ENCODE measurements at regions of chr2 and their contacts with region 1.

Region 1: GRCh38 chr2:206159346-206160124 is at the starts of genes EEF1B2 and NDUFS1:
- DNase-seq: peak; percentile 96 to 97 (median 97)
- H3K4me3 ChIP-seq: peak within 1 kb of the TSS; percentile 69 to 78
- H3K4me3 Mint-ChIP-seq: peak within 1 kb of the TSS; percentile 97 to 100 (median 100)
- H3K27ac ChIP-seq: peak within 1 kb of the TSS; percentile 94
- H3K27ac Mint-ChIP-seq: peak within 1 kb of the TSS; percentile 98 to 100 (median 99)
- H3K4me1 ChIP-seq: peaks cover 47% of the 10 kb centered on the region
- H3K4me1 Mint-ChIP-seq: peaks cover 38 to 71% (median 56%) of the 10 kb centered on the region in 4 donors
- H3K27me3 ChIP-seq: no peaks in the 10 kb centered on the region
- H3K27me3 Mint-ChIP-seq: no peaks in the 10 kb centered on the region
- total RNA-seq, gene EEF1B2: 947 to 1,026 TPM
- total RNA-seq, gene NDUFS1: 53.4 to 57.6 TPM

Region 2: GRCh38 chr2:206085742-206086445 is 73.6 kb before region 1 on chr2 and contains the start of gene INO80D:
- CTCF ChIA-PET with region 1: interaction called, 19 read pairs
- POLR2A ChIA-PET with region 1: interaction called, 29 read pairs
- intact Hi-C with region 1: loop called (anchors 1 kb)
- DNase-seq: peak; percentile 88 to 91 (median 89)
- H3K4me3 ChIP-seq: peak within 1 kb of the TSS; percentile 81 to 94
- H3K4me3 Mint-ChIP-seq: peak within 1 kb of the TSS; percentile 98 to 100 (median 99)
- H3K27ac ChIP-seq: peak within 1 kb of the TSS; percentile 98
- H3K27ac Mint-ChIP-seq: peak within 1 kb of the TSS; percentile 99 to 100 (median 100)
- H3K4me1 ChIP-seq: peaks cover 44% of the 10 kb centered on the region
- H3K4me1 Mint-ChIP-seq: peaks cover 24 to 54% (median 37%) of the 10 kb centered on the region in 4 donors
- H3K27me3 ChIP-seq: no peaks in the 10 kb centered on the region
- H3K27me3 Mint-ChIP-seq: no peaks in the 10 kb centered on the region
- total RNA-seq, gene INO80D: 40.2 to 41.3 TPM

Region 3: GRCh38 chr2:206274434-206275268 is 115.1 kb after region 1 on chr2 and contains the start of gene ZDBF2:
- CTCF ChIA-PET with region 1: interaction called, 5 read pairs
- POLR2A ChIA-PET with region 1: interaction called, 3 read pairs
- intact Hi-C with region 1: loop called (anchors 2 kb)
- DNase-seq: peak; percentile 48 to 68 (median 64)
- H3K4me3 ChIP-seq: peak within 1 kb of the TSS in 1 of 2 donors; percentile 61
- H3K4me3 Mint-ChIP-seq: peak within 1 kb of the TSS; percentile 83 to 92 (median 88)
- H3K27ac ChIP-seq: peak within 1 kb of the TSS; percentile 63
- H3K27ac Mint-ChIP-seq: peak within 1 kb of the TSS; percentile 72 to 94 (median 89)
- H3K4me1 ChIP-seq: peaks cover 13% of the 10 kb centered on the region
- H3K4me1 Mint-ChIP-seq: peaks cover 15 to 25% (median 21%) of the 10 kb centered on the region in 4 donors
- H3K27me3 ChIP-seq: peaks cover 11% of the 10 kb centered on the region
- H3K27me3 Mint-ChIP-seq: peaks cover 16 to 28% of the 10 kb centered on the region in 2 donors
- total RNA-seq, gene ZDBF2: 18.6 to 21.4 TPM

Region 4: DNA sequence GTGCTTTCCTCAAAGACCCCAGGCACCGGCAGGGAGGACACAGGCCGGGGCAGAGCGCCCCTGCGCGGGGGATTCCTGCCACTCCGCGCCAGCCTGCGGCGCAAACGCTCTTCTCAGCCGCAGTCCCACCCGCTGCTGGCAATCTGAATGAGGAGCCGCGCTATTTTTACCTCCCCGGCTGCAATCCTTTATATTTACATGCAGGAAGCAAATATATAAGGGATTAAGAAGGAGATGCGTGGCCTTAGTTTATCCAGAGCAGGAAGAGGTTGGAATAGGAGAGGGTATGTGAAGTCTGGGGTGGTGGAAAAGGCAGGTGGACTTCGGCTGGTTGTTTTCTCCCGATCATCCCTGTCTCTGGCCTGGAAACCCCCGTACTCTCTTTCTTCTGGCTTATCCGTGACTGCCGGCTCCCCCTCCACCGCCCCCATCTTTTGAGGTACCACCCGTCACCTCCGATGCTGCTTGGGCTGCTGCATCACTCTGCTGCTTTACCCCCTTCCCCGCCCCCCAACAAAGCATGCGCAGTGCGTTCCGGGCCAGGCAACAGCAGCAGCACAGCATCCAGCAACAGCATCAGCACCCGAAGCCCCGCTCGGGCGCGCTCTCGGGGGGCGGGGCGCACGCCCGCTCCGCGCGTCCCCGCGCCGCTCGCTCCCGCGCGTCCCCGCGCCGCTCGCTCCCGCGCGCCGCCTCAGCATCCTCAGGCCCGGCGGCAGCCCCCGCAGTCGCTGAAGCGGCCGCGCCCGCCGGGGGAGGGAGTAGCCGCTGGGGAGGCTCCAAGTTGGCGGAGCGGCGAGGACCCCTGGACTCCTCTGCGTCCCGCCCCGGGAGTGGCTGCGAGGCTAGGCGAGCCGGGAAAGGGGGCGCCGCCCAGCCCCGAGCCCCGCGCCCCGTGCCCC is 283.5 kb after region 1 on chr2 and contains the start of gene ADAM23:
- CTCF ChIA-PET with region 1: no interaction called
- POLR2A ChIA-PET with region 1: no interaction called
- intact Hi-C with region 1: loop called (anchors 10 kb)
- DNase-seq: peak; percentile 47 to 79 (median 54)
- H3K4me3 ChIP-seq: peak within 1 kb of the TSS in 1 of 2 donors; percentile 36
- H3K4me3 Mint-ChIP-seq: peak within 1 kb of the TSS; percentile 76 to 93 (median 88)
- H3K27ac ChIP-seq: no peak within 1 kb of the TSS
- H3K27ac Mint-ChIP-seq: peak within 1 kb of the TSS in 5 of 7 donors; percentile 37 to 87 (median 76)
- H3K4me1 ChIP-seq: peaks cover 13% of the 10 kb centered on the region
- H3K4me1 Mint-ChIP-seq: peaks cover 9 to 28% (median 15%) of the 10 kb centered on the region in 4 donors
- H3K27me3 ChIP-seq: peaks cover 10% of the 10 kb centered on the region
- H3K27me3 Mint-ChIP-seq: peaks cover 40 to 50% of the 10 kb centered on the region in 2 donors
- total RNA-seq, gene ADAM23: 28.1 to 31.3 TPM

Region 5: DNA sequence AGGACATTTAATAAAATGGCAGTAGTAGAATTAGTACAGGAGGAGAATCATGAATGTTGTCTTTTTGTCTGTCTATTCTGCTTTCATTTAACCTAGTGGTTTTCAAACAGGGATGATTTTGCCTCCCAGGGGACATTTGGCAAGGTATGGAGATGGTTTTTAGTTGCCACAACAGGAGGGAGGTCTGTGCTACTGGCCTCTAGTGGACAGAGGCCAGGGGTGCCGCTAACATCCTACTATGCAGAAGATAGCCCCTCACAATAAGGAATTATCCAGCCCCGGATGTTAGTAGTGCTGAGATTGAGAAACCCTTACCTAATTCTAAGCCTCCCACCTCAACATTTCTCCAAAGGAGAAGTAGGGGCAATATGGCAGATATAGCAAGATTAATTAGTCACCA is 624.2 kb after region 1 on chr2:
- CTCF ChIA-PET with region 1: no interaction called
- POLR2A ChIA-PET with region 1: no interaction called
- intact Hi-C with region 1: loop called (anchors 5 kb)
- DNase-seq: no peak
- H3K4me3 ChIP-seq: no peak overlapping the region
- H3K4me3 Mint-ChIP-seq: no peak overlapping the region
- H3K27ac ChIP-seq: no peak overlapping the region
- H3K27ac Mint-ChIP-seq: peak overlapping the region in 1 of 7 donors; percentile 17
- H3K4me1 ChIP-seq: no peaks in the 10 kb centered on the region
- H3K4me1 Mint-ChIP-seq: peaks cover 5 to 18% (median 15%) of the 10 kb centered on the region in 4 donors
- H3K27me3 ChIP-seq: no peaks in the 10 kb centered on the region
- H3K27me3 Mint-ChIP-seq: no peaks in the 10 kb centered on the region